Endothelial cell of umbilical vein (primary cell): ENCODE measurements at regions of chr19 and their contacts with region 1.

Region 1: GRCh38 chr19:18496167-18496979 is 25.5 kb downstream of the ELL start:
- DNase-seq: no peak
- H3K4me3 ChIP-seq: no peak overlapping the region
- H3K27ac ChIP-seq: no peak overlapping the region
- H3K4me1 ChIP-seq: peaks cover 6% of the 10 kb centered on the region
- H3K27me3 ChIP-seq: no peaks in the 10 kb centered on the region
- CTCF ChIP-seq: no peak
- POLR2A ChIP-seq: no peak

Region 2: DNA sequence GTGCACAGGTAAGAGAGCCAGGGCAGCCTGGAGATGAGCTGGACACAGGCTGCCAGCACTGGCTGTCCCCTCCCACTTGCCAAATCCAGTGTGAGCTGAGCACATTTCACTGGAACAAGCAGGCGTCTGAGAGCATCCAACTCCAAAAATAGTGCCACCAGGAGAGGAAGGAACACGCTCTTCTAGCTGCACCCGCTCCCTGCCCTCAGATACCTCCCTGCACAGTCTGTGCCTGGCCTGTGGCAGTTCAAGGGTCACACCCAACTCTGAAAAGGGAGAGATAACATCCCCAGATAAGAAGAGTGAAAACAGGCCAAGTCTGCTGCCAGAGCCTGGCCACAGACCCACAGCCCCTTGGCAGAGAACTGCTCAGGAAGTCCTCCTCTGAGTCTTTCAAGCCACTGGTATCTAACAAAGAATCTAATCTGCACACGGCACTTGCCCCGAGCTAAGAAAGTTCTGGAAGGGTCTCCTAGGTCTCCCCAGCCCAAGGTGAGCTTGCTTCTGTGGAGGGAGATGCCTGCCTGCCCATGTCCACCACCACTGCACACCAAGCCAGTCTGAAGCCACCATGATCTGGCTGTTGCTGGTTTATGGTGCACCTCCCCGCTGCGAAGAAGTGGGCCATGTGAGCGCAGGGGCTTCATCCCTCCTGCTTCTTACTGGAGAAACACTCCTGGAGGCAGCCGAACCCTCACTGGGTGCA is 10.8 kb after region 1 on chr19:
- CTCF ChIA-PET with region 1: interaction called, 16 read pairs
- POLR2A ChIA-PET with region 1: no interaction called
- dilution Hi-C with region 1: no loop called
- intact Hi-C with region 1: no loop called
- DNase-seq: peak; percentile 27
- H3K4me3 ChIP-seq: no peak overlapping the region
- H3K27ac ChIP-seq: no peak overlapping the region
- H3K4me1 ChIP-seq: peaks cover 14% of the 10 kb centered on the region
- H3K27me3 ChIP-seq: no peaks in the 10 kb centered on the region
- CTCF ChIP-seq: no peak
- POLR2A ChIP-seq: no peak

Region 3: DNA sequence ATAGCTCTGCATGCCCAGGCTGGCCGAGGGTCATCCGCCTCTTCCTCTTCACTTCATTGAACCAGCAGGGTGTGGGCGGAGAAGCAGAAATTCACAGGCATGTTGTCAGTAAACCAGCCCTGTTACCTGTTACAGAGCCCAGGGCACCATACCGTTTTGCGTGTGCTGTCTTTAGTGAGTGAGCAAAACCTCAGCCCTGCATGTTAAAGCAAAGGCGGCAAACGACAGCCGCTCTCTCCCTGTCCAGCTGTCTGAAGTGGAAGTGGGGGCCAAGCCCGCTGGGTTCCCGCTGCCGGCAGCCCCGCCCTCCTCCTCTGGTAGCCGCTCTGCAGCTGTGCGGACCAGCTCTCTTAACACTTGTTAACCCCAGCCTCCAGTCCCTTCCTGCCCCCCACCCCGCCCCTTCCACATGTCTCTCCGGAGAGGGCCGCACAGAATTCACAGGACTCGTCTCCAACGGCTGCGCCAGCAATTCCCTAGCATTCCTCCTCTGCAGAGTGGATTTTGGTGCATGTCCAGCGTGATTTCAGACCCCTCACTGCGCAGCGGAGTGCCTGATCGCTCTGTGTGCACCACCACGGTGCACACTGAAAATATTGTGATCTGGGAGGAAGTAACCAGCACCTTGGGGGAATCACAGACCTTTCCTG is 153.1 kb after region 1 on chr19:
- CTCF ChIA-PET with region 1: no interaction called
- POLR2A ChIA-PET with region 1: no interaction called
- dilution Hi-C with region 1: no loop called
- intact Hi-C with region 1: no loop called
- DNase-seq: peak; percentile 68
- H3K4me3 ChIP-seq: no peak overlapping the region
- H3K27ac ChIP-seq: peak overlapping the region; percentile 67
- H3K4me1 ChIP-seq: peaks cover 30% of the 10 kb centered on the region
- H3K27me3 ChIP-seq: no peaks in the 10 kb centered on the region
- CTCF ChIP-seq: no peak
- POLR2A ChIP-seq: no peak